ENCODE measurements at regions of chr7 and their contacts with region 1.

Region 1: GRCh38 chr7:149261829-149262617 is at the start of gene ZNF783:
- DNase-seq: peak; percentile 77 to 88 (median 86)
- ATAC-seq: peak; percentile 97
- H3K4me3 ChIP-seq: peak within 1 kb of the TSS; percentile 74
- H3K4me3 Mint-ChIP-seq: peak within 1 kb of the TSS; percentile 83 to 91 (median 88)
- H3K27ac ChIP-seq: peak within 1 kb of the TSS; percentile 71
- H3K27ac Mint-ChIP-seq: peak within 1 kb of the TSS; percentile 84 to 93 (median 90)
- H3K4me1 ChIP-seq: peaks cover 19 to 20% of the 10 kb centered on the region in 2 donors
- H3K4me1 Mint-ChIP-seq: peaks cover 22 to 46% (median 32%) of the 10 kb centered on the region in 7 donors
- H3K27me3 ChIP-seq: no peaks in the 10 kb centered on the region
- H3K27me3 Mint-ChIP-seq: no peaks in the 10 kb centered on the region
- total RNA-seq, gene ZNF783: 23.3 to 49.2 (median 36.0) TPM

Region 2: DNA sequence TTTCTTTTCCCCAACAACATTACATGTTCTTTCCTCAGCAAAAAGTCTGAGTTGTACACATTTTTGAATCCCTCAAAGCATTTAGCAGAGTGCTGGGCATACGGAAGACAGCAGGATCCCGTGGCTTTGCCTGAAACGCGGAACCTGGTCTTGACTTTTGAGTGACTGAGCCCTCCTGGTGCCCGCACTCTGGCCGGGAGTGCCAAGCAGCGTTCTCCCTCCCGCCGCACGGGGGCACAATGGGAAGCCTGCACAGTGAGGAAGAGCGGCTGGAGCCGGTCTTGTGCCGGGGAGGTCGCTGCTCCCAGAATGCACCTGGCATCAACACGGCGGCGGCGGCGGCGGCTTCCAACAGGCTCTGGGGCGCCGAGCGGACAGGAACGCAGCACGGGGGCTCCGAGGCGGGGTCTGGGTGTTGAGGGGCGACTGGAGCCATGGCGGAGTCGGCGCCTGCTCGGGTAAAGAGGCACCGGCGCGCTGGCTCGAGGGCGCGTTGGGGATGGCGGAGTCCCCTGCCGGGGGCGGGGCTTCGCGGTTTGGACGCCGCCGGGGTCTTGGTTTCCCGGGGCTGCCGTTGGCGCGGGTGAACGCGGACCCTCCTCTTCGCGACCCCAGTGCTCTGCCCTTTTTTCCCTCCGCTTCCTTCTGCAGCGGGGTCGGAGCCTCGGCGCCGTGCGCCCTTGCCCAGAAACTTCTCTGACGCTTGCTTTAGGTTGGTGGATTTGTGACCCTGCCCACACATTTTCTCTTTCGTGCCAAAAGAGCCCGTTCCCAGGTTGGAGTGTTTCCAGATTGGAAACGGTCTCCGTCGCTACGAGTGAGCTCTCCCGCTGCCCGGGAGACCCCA is 22.5 kb before region 1 on chr7 and contains the start of gene ZNF212:
- CTCF ChIA-PET with region 1: no interaction called
- POLR2A ChIA-PET with region 1: interaction called, 9 read pairs
- intact Hi-C with region 1: loop called (anchors 1 kb)
- DNase-seq: peak; percentile 75 to 89 (median 84)
- ATAC-seq: peak; percentile 100
- H3K4me3 ChIP-seq: peak within 1 kb of the TSS; percentile 90
- H3K4me3 Mint-ChIP-seq: peak within 1 kb of the TSS; percentile 85 to 95 (median 92)
- H3K27ac ChIP-seq: peak within 1 kb of the TSS; percentile 76
- H3K27ac Mint-ChIP-seq: peak within 1 kb of the TSS; percentile 71 to 89 (median 87)
- H3K4me1 ChIP-seq: peaks cover 14 to 16% of the 10 kb centered on the region in 2 donors
- H3K4me1 Mint-ChIP-seq: peaks cover 23 to 43% (median 33%) of the 10 kb centered on the region in 7 donors
- H3K27me3 ChIP-seq: no peaks in the 10 kb centered on the region
- H3K27me3 Mint-ChIP-seq: peaks cover 0 to 6% (median 0%) of the 10 kb centered on the region in 5 donors
- total RNA-seq, gene ZNF212: 10.4 to 20.6 (median 13.3) TPM

Region 3: DNA sequence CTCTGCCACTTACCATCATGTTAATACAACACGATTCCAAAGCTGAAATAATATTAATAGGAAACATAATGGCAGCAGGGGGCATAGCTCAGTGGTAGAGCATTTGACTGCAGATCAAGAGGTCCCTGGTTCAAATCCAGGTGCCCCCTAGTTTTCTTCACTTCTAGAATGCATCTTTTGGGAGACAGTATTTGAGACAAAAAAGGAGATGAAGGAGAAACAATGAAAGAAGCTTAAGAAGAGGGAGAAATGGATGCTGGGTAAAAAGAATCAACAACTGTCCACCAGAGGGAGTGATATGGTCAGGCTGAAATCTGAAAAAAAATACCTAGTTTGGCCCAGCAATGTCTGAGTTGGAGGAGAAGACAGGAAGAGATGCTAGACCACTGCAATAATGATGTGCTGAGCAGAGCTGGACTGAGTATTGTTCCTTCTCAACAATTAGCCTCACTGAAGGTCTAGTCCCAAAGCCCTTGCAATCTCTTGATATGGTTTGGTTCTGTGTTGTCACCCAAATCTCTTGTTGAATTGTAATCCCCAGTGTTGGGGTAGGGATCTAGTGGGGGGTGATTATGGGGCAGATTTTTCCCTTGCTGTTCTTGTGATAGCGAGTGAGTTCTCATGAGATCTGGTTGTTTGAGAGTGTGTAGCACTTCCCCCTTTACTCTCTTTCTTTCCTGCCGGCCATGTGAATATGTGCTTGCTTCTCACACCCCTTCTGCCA is 48.3 kb after region 1 on chr7:
- CTCF ChIA-PET with region 1: interaction called, 3 read pairs
- POLR2A ChIA-PET with region 1: no interaction called
- intact Hi-C with region 1: loop called in 1 of 2 experiments (anchors 1 kb)
- DNase-seq: peak in 3 of 9 donors; percentile 11 to 30 (median 26)
- ATAC-seq: peak; percentile 65
- H3K4me3 ChIP-seq: no peak overlapping the region
- H3K4me3 Mint-ChIP-seq: peak overlapping the region in 1 of 10 donors; percentile 0
- H3K27ac ChIP-seq: no peak overlapping the region
- H3K27ac Mint-ChIP-seq: peak overlapping the region in 5 of 9 donors; percentile 2 to 42 (median 9)
- H3K4me1 ChIP-seq: no peaks in the 10 kb centered on the region
- H3K4me1 Mint-ChIP-seq: peaks cover 0 to 6% (median 5%) of the 10 kb centered on the region in 7 donors
- H3K27me3 ChIP-seq: no peaks in the 10 kb centered on the region
- H3K27me3 Mint-ChIP-seq: peaks cover 0 to 12% (median 0%) of the 10 kb centered on the region in 5 donors

Region 4: GRCh38 chr7:149422129-149422913 is 160.3 kb after region 1 on chr7:
- CTCF ChIA-PET with region 1: interaction called, 4 read pairs
- POLR2A ChIA-PET with region 1: interaction called, 19 read pairs
- intact Hi-C with region 1: loop called (anchors 1 kb)
- DNase-seq: peak; percentile 25 to 85 (median 75)
- ATAC-seq: peak; percentile 99
- H3K4me3 ChIP-seq: peak overlapping the region; percentile 75
- H3K4me3 Mint-ChIP-seq: peak overlapping the region; percentile 69 to 80 (median 76)
- H3K27ac ChIP-seq: peak overlapping the region; percentile 77
- H3K27ac Mint-ChIP-seq: peak overlapping the region in 8 of 9 donors; percentile 68 to 84 (median 81)
- H3K4me1 ChIP-seq: no peaks in the 10 kb centered on the region
- H3K4me1 Mint-ChIP-seq: peaks cover 0 to 17% (median 7%) of the 10 kb centered on the region in 7 donors
- H3K27me3 ChIP-seq: no peaks in the 10 kb centered on the region
- H3K27me3 Mint-ChIP-seq: peaks cover 0 to 14% (median 0%) of the 10 kb centered on the region in 5 donors

Region 5: GRCh38 chr7:149714050-149714909 is 452.3 kb after region 1 on chr7:
- CTCF ChIA-PET with region 1: no interaction called
- POLR2A ChIA-PET with region 1: no interaction called
- intact Hi-C with region 1: loop called in 1 of 2 experiments (anchors 5 kb)
- DNase-seq: peak; percentile 68 to 89 (median 84)
- ATAC-seq: peak; percentile 99
- H3K4me3 ChIP-seq: peak overlapping the region; percentile 75
- H3K4me3 Mint-ChIP-seq: peak overlapping the region; percentile 71 to 87 (median 80)
- H3K27ac ChIP-seq: peak overlapping the region; percentile 72
- H3K27ac Mint-ChIP-seq: peak overlapping the region in 4 of 9 donors; percentile 5 to 72 (median 54)
- H3K4me1 ChIP-seq: peaks cover 10 to 13% of the 10 kb centered on the region in 2 donors
- H3K4me1 Mint-ChIP-seq: peaks cover 12 to 26% (median 19%) of the 10 kb centered on the region in 7 donors
- H3K27me3 ChIP-seq: no peaks in the 10 kb centered on the region
- H3K27me3 Mint-ChIP-seq: peaks cover 0 to 4% (median 0%) of the 10 kb centered on the region in 5 donors